Heart left ventricle (tissue), 16 donors: ENCODE measurements at regions of chr9 and their contacts with region 1.

Region 1: GRCh38 chr9:137017791-137018497 is 10.1 kb downstream of the ABCA2 start:
- DNase-seq: no peak
- ATAC-seq: no peak
- H3K4me3 ChIP-seq: no peak overlapping the region
- H3K27ac ChIP-seq: no peak overlapping the region
- H3K4me1 ChIP-seq: no peaks in the 10 kb centered on the region
- H3K27me3 ChIP-seq: no peaks in the 10 kb centered on the region
- CTCF ChIP-seq: no peak
- POLR2A ChIP-seq: no peak

Region 2: DNA sequence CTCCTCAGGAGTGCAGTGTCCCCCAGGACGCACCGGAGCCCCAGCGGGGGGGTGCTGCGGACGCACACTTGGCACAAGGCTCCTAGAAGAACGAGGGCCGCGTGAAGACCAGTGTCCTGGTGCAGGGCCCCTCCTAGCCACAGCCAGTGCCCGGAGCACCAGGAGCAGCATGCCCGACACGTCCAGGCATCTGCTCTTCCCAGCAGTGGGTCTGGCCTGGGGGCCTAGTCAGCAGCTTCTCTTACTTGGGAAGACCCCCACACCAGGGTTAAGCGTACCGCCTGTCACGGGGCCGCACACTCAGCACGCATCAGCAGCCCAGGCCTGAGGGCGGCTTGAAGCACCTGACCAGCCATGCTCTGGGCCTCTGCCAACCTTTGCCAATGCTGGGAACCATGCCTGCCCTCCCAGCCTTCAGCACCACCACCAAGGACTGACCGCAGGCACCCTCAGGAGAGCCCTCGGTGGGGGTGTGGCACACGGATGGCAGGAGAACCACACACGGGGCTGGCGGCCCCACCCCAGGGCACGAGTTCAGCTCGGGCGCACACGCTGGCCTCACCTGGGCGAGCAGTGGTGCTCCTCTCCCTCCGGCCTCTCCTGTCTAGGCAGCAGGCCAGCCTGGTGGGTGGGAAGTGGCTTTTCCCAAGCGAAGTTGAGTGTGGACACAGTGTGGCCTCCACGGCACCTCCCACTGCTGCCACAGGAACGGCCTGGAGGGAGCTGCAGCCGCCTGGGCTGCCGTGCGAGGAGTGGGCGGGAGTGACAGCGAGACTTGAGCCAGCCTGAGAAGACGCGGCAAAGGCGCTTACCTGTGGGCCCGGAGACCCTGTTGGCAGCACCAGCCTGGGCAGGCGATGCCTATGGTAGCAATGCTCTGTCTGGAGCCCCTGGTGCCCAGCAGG is 187.7 kb before region 1 on chr9:
- intact Hi-C with region 1: loop called in 1 of 10 experiments (anchors 5 kb)
- DNase-seq: peak in 3 of 5 donors; percentile 16 to 54 (median 49)
- ATAC-seq: peak in 3 of 4 donors; percentile 14 to 34 (median 31)
- H3K4me3 ChIP-seq: no peak overlapping the region
- H3K27ac ChIP-seq: no peak overlapping the region
- H3K4me1 ChIP-seq: peaks cover 0 to 6% (median 0%) of the 10 kb centered on the region in 12 donors
- H3K27me3 ChIP-seq: no peaks in the 10 kb centered on the region
- CTCF ChIP-seq: no peak
- POLR2A ChIP-seq: no peak

Region 3: DNA sequence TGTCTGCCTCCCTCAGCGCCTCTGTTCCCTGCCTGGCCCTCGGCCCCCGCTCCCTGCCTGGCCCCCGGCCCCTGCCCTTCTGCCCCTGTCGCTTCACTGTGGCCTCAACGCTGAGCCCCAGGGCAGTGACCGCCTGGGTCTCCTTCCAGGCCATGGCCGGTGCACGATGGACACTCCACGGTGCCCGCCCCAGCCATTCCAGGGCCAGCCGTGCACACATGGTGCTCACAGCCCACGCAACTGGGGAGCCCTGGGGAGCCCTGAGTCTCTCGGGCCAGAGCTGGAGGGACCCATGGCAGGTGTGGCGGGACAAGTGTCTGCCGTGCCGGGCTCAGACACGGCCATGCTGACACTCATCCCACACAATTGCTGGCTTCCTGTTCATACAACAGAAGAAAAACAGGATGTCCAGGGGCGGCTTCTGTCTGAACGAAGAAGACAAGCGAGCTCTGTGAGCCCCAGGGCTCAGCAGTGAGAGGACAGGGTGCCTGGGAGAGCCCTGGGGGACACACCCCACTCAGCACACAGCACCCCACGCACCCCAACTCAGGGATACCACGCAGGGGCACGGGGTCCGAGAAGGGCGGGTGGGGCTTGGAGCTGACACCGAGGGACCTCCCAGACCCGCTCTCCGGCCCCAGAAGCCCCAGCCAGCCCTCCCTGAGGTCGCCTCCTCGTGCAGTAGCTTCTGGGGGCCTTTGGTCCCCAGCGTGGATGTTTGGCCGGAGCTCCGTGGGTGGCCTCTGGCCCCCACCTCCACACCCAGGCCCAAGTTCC is 369.4 kb after region 1 on chr9:
- intact Hi-C with region 1: no loop called
- DNase-seq: no peak
- ATAC-seq: peak in 3 of 4 donors; percentile 27 to 64 (median 36)
- H3K4me3 ChIP-seq: peak overlapping the region in 8 of 12 donors; percentile 3 to 32 (median 28)
- H3K27ac ChIP-seq: peak overlapping the region; percentile 72 to 96 (median 90)
- H3K4me1 ChIP-seq: peaks cover 8 to 32% (median 18%) of the 10 kb centered on the region in 12 donors
- H3K27me3 ChIP-seq: no peaks in the 10 kb centered on the region
- CTCF ChIP-seq: no peak
- POLR2A ChIP-seq: no peak